PC-9 (cell line): ENCODE measurements at regions of chr9 and their contacts with region 1.

Region 1: GRCh38 chr9:136345281-136346156 is 18.0 kb downstream of the DNLZ start:
- DNase-seq: peak; percentile 52 to 87
- H3K4me3 ChIP-seq: no peak overlapping the region
- H3K27ac ChIP-seq: no peak overlapping the region
- H3K4me1 ChIP-seq: peaks cover 7% of the 10 kb centered on the region; the same call in 1 of the 2 replicates
- H3K27me3 ChIP-seq: no peaks in the 10 kb centered on the region
- CTCF ChIP-seq: peak; percentile 58; the same call in 1 of the 2 replicates

Region 2: GRCh38 chr9:136363606-136364370 is 18.3 kb after region 1 on chr9 and contains the start of gene DNLZ:
- CTCF ChIA-PET with region 1: interaction called, 19 read pairs
- POLR2A ChIA-PET with region 1: interaction called, 11 read pairs
- intact Hi-C with region 1: loop called (anchors 1 kb)
- DNase-seq: peak; percentile 52 to 89
- H3K4me3 ChIP-seq: peak within 1 kb of the TSS; percentile 77
- H3K27ac ChIP-seq: peak within 1 kb of the TSS; percentile 65
- H3K4me1 ChIP-seq: peaks cover 12% of the 10 kb centered on the region
- H3K27me3 ChIP-seq: no peaks in the 10 kb centered on the region
- CTCF ChIP-seq: peak; percentile 90
- total RNA-seq, gene DNLZ: 9.1 and 19.1 TPM in 2 replicates

Region 3: GRCh38 chr9:136429683-136430590 is 84.4 kb after region 1 on chr9:
- CTCF ChIA-PET with region 1: no interaction called
- POLR2A ChIA-PET with region 1: no interaction called
- intact Hi-C with region 1: no loop called
- DNase-seq: no peak
- H3K4me3 ChIP-seq: no peak overlapping the region
- H3K27ac ChIP-seq: no peak overlapping the region
- H3K4me1 ChIP-seq: no peaks in the 10 kb centered on the region
- H3K27me3 ChIP-seq: no peaks in the 10 kb centered on the region
- CTCF ChIP-seq: no peak

Region 4: DNA sequence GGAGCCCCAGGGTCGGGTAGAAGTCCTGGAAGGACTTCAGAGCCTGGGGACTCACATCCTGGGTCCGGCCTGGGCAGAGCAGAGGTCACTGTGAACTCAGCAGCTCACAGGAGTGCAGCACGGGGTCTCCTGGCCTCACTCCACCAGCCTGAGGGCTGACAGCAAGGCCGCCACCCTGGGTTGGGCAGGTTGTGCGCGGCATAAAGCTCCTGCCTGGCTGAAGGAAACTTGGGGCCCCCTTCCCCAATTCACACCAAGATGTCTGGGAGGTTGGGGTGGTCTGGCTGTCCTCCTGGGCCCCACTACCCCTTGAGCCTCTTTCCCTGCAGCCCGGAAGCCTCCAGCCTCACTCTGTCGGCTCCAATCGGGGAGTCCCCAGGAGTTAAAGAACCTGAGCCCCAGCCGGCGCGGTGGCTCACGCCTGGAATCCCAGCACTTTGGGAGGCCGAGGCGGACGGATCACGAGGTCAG is 416.7 kb after region 1 on chr9:
- CTCF ChIA-PET with region 1: interaction called, 12 read pairs
- POLR2A ChIA-PET with region 1: no interaction called
- intact Hi-C with region 1: no loop called
- DNase-seq: no peak
- H3K4me3 ChIP-seq: no peak overlapping the region
- H3K27ac ChIP-seq: no peak overlapping the region
- H3K4me1 ChIP-seq: peaks cover 6% of the 10 kb centered on the region
- H3K27me3 ChIP-seq: peaks cover 2% of the 10 kb centered on the region; the same call in 1 of the 2 replicates
- CTCF ChIP-seq: no peak